ENCODE measurements at regions of chr5 and their contacts with region 1.

Region 1: DNA sequence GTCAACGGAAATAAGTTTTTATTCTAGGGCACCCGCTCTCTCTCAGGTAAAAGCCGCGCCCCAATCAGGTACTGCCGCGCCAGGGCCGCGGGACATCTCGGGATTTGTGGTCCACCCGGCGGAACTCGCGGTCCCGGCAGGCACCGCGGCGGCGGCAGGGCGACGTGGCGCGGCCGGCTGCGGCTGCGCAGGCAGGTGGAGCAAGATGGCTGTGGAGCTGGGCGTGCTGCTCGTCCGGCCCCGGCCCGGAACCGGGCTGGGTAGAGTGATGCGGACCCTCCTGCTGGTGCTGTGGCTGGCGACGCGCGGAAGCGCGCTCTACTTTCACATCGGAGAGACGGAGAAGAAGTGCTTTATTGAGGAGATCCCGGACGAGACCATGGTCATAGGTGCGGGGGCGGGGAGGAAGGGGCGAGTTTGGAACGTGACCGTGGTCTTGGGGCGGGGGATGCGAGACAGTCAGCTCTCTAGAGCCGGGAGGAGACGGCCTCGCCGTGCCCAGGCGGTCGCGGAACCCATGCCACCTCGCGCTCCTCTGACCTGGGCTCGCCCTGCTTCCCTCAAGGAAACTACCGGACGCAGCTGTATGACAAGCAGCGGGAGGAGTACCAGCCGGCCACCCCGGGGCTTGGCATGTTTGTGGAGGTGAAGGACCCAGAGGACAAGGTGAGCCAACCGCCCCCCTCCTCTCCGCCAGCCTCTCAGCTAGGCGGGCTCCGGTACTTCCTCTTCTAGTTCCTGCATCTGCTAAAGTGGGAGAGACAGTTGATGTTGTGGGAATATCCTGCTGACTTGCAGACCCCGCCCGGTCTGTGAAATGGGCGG is at the start of gene TMED9:
- DNase-seq: peak; percentile 83 to 92 (median 90)
- ATAC-seq: peak; percentile 99
- H3K4me3 ChIP-seq: peak within 1 kb of the TSS; percentile 95
- H3K4me3 Mint-ChIP-seq: peak within 1 kb of the TSS; percentile 81 to 100 (median 96)
- H3K27ac ChIP-seq: peak within 1 kb of the TSS; percentile 71
- H3K27ac Mint-ChIP-seq: peak within 1 kb of the TSS; percentile 83 to 99 (median 95)
- H3K4me1 ChIP-seq: peaks cover 16% of the 10 kb centered on the region in 2 donors
- H3K4me1 Mint-ChIP-seq: peaks cover 18 to 35% (median 22%) of the 10 kb centered on the region in 7 donors
- H3K27me3 ChIP-seq: no peaks in the 10 kb centered on the region
- H3K27me3 Mint-ChIP-seq: peaks cover 8 to 29% (median 12%) of the 10 kb centered on the region in 5 donors
- total RNA-seq, gene TMED9: 50.5 to 144 (median 67.5) TPM

Region 2: GRCh38 chr5:177303121-177303924 is 288.9 kb before region 1 on chr5 and contains the starts of genes PRELID1 and RAB24:
- CTCF ChIA-PET with region 1: no interaction called
- POLR2A ChIA-PET with region 1: no interaction called
- intact Hi-C with region 1: loop called in 1 of 2 experiments (anchors 1 kb)
- DNase-seq: peak; percentile 78 to 95 (median 85)
- ATAC-seq: peak; percentile 80
- H3K4me3 ChIP-seq: peak within 1 kb of the TSS; percentile 98
- H3K4me3 Mint-ChIP-seq: peak within 1 kb of the TSS; percentile 84 to 95 (median 88)
- H3K27ac ChIP-seq: peak within 1 kb of the TSS; percentile 78
- H3K27ac Mint-ChIP-seq: peak within 1 kb of the TSS; percentile 73 to 96 (median 90)
- H3K4me1 ChIP-seq: peaks cover 46 to 49% of the 10 kb centered on the region in 2 donors
- H3K4me1 Mint-ChIP-seq: peaks cover 52 to 76% (median 74%) of the 10 kb centered on the region in 7 donors
- H3K27me3 ChIP-seq: no peaks in the 10 kb centered on the region
- H3K27me3 Mint-ChIP-seq: no peaks in the 10 kb centered on the region
- total RNA-seq, gene PRELID1: 49.0 to 172 (median 57.2) TPM
- total RNA-seq, gene RAB24: 18.0 to 47.5 (median 24.3) TPM

Region 3: GRCh38 chr5:177516604-177517568 is 75.3 kb before region 1 on chr5 and contains the start of gene DDX41:
- CTCF ChIA-PET with region 1: no interaction called
- POLR2A ChIA-PET with region 1: interaction called, 3 read pairs
- intact Hi-C with region 1: loop called (anchors 1 kb)
- DNase-seq: peak; percentile 88 to 96 (median 95)
- ATAC-seq: peak; percentile 92
- H3K4me3 ChIP-seq: peak within 1 kb of the TSS; percentile 76
- H3K4me3 Mint-ChIP-seq: peak within 1 kb of the TSS; percentile 92 to 99 (median 96)
- H3K27ac ChIP-seq: peak within 1 kb of the TSS; percentile 79
- H3K27ac Mint-ChIP-seq: peak within 1 kb of the TSS; percentile 85 to 97 (median 92)
- H3K4me1 ChIP-seq: peaks cover 15 to 17% of the 10 kb centered on the region in 2 donors
- H3K4me1 Mint-ChIP-seq: peaks cover 42 to 58% (median 52%) of the 10 kb centered on the region in 7 donors
- H3K27me3 ChIP-seq: no peaks in the 10 kb centered on the region
- H3K27me3 Mint-ChIP-seq: peaks cover 0 to 2% (median 0%) of the 10 kb centered on the region in 5 donors
- total RNA-seq, gene DDX41: 65.8 to 126 (median 76.1) TPM

Region 4: GRCh38 chr5:177576169-177576568 is 16.1 kb before region 1 on chr5:
- CTCF ChIA-PET with region 1: no interaction called
- POLR2A ChIA-PET with region 1: interaction called, 4 read pairs
- intact Hi-C with region 1: loop called in 1 of 2 experiments (anchors 1 kb)
- DNase-seq: no peak
- ATAC-seq: no peak
- H3K4me3 ChIP-seq: no peak overlapping the region
- H3K4me3 Mint-ChIP-seq: no peak overlapping the region
- H3K27ac ChIP-seq: no peak overlapping the region
- H3K27ac Mint-ChIP-seq: no peak overlapping the region
- H3K4me1 ChIP-seq: no peaks in the 10 kb centered on the region
- H3K4me1 Mint-ChIP-seq: no peaks in the 10 kb centered on the region
- H3K27me3 ChIP-seq: no peaks in the 10 kb centered on the region
- H3K27me3 Mint-ChIP-seq: peaks cover 0 to 7% (median 0%) of the 10 kb centered on the region in 5 donors